ENCODE measurements at regions of chr19 and their contacts with region 1.

Region 1: GRCh38 chr19:1275260-1275975 is at the start of gene FAM174C:
- DNase-seq: peak; percentile 95 to 97 (median 97)
- H3K4me3 ChIP-seq: peak within 1 kb of the TSS; percentile 42 to 87
- H3K4me3 Mint-ChIP-seq: peak within 1 kb of the TSS; percentile 87 to 93 (median 90)
- H3K27ac ChIP-seq: peak within 1 kb of the TSS; percentile 93
- H3K27ac Mint-ChIP-seq: peak within 1 kb of the TSS; percentile 95 to 98 (median 96)
- H3K4me1 ChIP-seq: peaks cover 61% of the 10 kb centered on the region
- H3K4me1 Mint-ChIP-seq: peaks cover 30 to 66% (median 42%) of the 10 kb centered on the region in 4 donors
- H3K27me3 ChIP-seq: no peaks in the 10 kb centered on the region
- H3K27me3 Mint-ChIP-seq: no peaks in the 10 kb centered on the region
- total RNA-seq, gene FAM174C: 50.5 to 54.2 TPM

Region 2: DNA sequence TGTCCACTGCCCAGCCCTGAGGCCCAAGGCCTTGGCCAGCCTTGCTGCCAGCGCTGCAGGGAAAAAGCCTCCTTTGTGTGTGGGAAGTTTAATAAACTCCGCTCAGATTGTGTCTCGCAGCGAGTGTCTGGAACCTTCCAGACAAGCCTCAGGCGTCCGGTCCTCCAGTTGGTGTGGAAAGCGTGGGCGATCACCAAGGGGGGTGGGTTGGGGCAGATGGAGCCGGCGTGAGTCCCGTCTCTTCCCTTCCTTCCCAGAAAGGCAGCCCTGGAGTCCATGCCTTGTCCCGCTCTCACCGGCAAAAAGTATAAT is 65.2 kb before region 1 on chr19:
- CTCF ChIA-PET with region 1: no interaction called
- POLR2A ChIA-PET with region 1: no interaction called
- intact Hi-C with region 1: no loop called
- DNase-seq: peak in 1 of 5 donors; percentile 28
- H3K4me3 ChIP-seq: no peak overlapping the region
- H3K4me3 Mint-ChIP-seq: peak overlapping the region in 4 of 8 donors; percentile 8 to 65 (median 30)
- H3K27ac ChIP-seq: no peak overlapping the region
- H3K27ac Mint-ChIP-seq: peak overlapping the region in 2 of 7 donors; percentile 52 to 55
- H3K4me1 ChIP-seq: peaks cover 64% of the 10 kb centered on the region
- H3K4me1 Mint-ChIP-seq: peaks cover 17 to 54% (median 34%) of the 10 kb centered on the region in 4 donors
- H3K27me3 ChIP-seq: no peaks in the 10 kb centered on the region
- H3K27me3 Mint-ChIP-seq: no peaks in the 10 kb centered on the region

Region 3: DNA sequence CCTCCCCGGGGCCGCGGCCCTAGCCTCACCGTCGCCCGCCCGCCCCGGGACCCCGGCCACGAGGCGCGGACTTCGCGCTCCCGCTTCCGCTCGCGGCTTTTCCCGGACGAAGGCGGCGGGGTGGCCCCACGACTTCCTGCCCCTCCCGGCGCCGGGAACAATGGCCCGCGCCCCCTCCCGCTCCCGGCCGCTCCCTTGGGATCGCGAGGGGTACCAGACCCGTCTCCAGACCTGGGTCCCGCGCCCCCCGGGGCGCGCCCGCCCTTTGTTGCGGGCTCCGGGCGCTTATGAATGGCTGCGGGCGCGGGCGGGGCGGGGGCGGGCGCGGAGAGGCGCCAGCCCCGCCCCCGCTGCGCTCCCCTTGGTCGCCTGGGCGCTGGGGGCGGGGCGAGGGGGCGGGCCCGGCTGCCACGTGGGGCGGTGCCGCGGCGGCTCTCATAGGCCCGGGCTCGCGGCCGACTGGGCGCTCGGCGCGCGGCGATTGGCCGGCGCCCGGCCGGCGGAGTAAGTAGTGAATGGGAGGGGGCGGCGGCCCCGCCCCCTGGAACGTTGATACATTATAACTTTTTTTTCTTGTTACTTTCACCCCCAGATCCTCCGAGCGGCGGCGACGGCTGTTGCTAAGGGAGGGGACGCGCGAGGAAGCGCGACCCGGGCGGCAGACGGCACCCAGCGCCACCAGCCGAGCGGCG is 26.0 kb before region 1 on chr19:
- CTCF ChIA-PET with region 1: interaction called, 31 read pairs
- POLR2A ChIA-PET with region 1: interaction called, 41 read pairs
- intact Hi-C with region 1: no loop called
- DNase-seq: peak; percentile 92 to 97 (median 95)
- H3K4me3 ChIP-seq: peak overlapping the region in 1 of 2 donors; percentile 77
- H3K4me3 Mint-ChIP-seq: peak overlapping the region; percentile 83 to 94 (median 90)
- H3K27ac ChIP-seq: peak overlapping the region; percentile 92
- H3K27ac Mint-ChIP-seq: peak overlapping the region; percentile 89 to 94 (median 91)
- H3K4me1 ChIP-seq: peaks cover 33% of the 10 kb centered on the region
- H3K4me1 Mint-ChIP-seq: peaks cover 2 to 26% (median 9%) of the 10 kb centered on the region in 4 donors
- H3K27me3 ChIP-seq: no peaks in the 10 kb centered on the region
- H3K27me3 Mint-ChIP-seq: no peaks in the 10 kb centered on the region

Region 4: DNA sequence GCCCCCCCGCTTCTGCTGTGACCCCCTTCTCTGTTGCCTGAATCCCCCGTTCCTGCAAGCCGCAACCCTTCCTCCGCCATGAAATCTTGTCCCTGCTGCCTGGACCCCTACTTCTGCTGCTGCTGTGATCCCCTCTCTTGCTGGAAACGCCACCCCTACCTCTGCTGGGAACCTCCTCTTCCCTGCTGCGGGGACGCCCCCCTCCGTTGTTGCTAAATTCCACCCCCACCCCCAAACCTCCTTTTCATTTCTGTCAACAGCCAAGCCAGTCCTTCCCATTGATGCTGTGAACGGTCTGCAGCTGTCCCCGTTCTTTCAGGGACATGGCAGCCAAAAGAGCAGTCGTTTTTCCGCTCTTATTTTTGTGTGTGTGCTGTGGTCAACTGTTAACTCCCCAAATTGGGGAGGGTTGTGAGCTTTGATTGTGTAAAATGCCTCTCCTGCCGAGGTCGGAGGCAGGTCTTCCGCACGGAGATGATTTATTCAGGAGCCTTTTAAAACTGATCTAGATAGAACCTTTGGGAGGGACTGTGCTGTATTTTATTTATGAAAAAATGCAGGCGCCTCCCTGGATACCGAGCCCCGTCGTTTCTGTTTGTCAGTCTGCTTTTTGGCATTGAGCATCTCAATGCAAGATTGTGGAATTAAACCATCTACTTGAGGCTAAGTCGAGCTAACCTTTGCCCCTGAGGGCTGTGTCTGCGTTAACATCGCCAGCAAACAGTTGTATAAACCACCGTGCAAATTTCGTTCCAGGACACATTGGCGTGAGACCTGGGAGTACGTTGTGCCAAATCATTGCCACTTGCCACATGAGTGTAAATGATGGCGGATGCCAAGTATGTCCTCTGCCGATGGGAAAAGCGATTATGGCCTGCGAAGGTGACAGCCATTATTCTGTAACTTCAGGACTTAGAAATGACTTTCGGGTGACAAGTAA is 80.4 kb after region 1 on chr19:
- CTCF ChIA-PET with region 1: no interaction called
- POLR2A ChIA-PET with region 1: interaction called, 4 read pairs
- intact Hi-C with region 1: loop called (anchors 5 kb)
- DNase-seq: no peak
- H3K4me3 ChIP-seq: peak overlapping the region; percentile 28 to 50
- H3K4me3 Mint-ChIP-seq: peak overlapping the region; percentile 68 to 93 (median 89)
- H3K27ac ChIP-seq: peak overlapping the region; percentile 36
- H3K27ac Mint-ChIP-seq: peak overlapping the region; percentile 47 to 85 (median 78)
- H3K4me1 ChIP-seq: peaks cover 16% of the 10 kb centered on the region
- H3K4me1 Mint-ChIP-seq: peaks cover 8 to 32% (median 14%) of the 10 kb centered on the region in 4 donors
- H3K27me3 ChIP-seq: no peaks in the 10 kb centered on the region
- H3K27me3 Mint-ChIP-seq: no peaks in the 10 kb centered on the region

Region 5: GRCh38 chr19:1383311-1384084 is 108.1 kb after region 1 on chr19 and contains the start of gene NDUFS7:
- CTCF ChIA-PET with region 1: interaction called, 4 read pairs
- POLR2A ChIA-PET with region 1: interaction called, 6 read pairs
- intact Hi-C with region 1: loop called (anchors 1 kb)
- DNase-seq: peak; percentile 89 to 98 (median 94)
- H3K4me3 ChIP-seq: peak within 1 kb of the TSS; percentile 81 to 89
- H3K4me3 Mint-ChIP-seq: peak within 1 kb of the TSS; percentile 89 to 98 (median 94)
- H3K27ac ChIP-seq: peak within 1 kb of the TSS; percentile 69
- H3K27ac Mint-ChIP-seq: peak within 1 kb of the TSS; percentile 96 to 100 (median 99)
- H3K4me1 ChIP-seq: peaks cover 16% of the 10 kb centered on the region
- H3K4me1 Mint-ChIP-seq: peaks cover 9 to 29% (median 16%) of the 10 kb centered on the region in 4 donors
- H3K27me3 ChIP-seq: no peaks in the 10 kb centered on the region
- H3K27me3 Mint-ChIP-seq: peaks cover 3 to 5% of the 10 kb centered on the region in 2 donors
- total RNA-seq, gene NDUFS7: 68.6 to 73.5 TPM

Region 6: DNA sequence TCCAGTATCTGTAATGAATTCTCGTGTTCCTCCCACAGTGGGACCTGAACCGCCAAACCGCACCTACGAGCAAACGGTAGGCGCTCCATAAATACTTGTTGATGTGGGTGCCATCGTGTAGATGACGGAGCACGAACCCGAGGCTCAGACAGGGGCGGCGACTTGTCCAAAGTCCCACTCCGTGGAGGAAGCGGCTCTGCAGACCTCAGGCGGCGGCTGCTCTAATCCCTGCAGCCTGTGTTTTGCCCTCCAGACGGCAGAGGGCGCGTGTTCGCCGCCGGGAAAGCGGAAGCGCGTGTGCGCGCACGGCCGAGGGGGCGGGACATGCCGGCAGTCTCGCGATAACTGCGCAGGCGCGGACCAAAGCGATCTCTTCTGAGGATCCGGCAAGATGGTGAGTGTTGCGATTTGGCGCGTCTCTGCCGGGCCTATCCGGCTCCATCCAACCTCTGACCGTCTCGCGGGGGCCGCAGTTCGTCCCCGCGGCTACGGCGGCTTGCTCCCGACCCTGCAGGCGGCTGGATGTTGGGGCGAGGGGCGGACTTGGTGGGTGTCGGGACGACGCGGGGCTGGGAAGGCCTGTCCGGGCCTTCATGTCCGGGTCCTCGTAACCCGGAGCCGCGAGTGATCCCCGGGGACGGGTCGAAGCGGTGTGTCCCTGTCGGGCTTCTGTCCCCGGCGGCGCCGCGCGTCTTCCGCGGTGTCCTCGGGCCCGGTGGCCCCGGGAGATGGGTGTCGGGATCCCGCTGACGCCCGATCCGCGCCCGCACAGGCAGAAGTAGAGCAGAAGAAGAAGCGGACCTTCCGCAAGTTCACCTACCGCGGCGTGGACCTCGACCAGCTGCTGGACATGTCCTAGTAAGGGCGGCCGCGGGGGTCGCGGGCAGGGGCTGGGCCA is 162.9 kb after region 1 on chr19 and contains the start of gene RPS15:
- CTCF ChIA-PET with region 1: no interaction called
- POLR2A ChIA-PET with region 1: interaction called, 3 read pairs
- intact Hi-C with region 1: loop called (anchors 1 kb)
- DNase-seq: peak; percentile 93 to 97 (median 96)
- H3K4me3 ChIP-seq: peak within 1 kb of the TSS; percentile 47 to 79
- H3K4me3 Mint-ChIP-seq: peak within 1 kb of the TSS; percentile 97 to 99 (median 98)
- H3K27ac ChIP-seq: peak within 1 kb of the TSS; percentile 93
- H3K27ac Mint-ChIP-seq: peak within 1 kb of the TSS; percentile 98 to 99 (median 99)
- H3K4me1 ChIP-seq: peaks cover 29% of the 10 kb centered on the region
- H3K4me1 Mint-ChIP-seq: peaks cover 1 to 38% (median 19%) of the 10 kb centered on the region in 4 donors
- H3K27me3 ChIP-seq: no peaks in the 10 kb centered on the region
- H3K27me3 Mint-ChIP-seq: no peaks in the 10 kb centered on the region
- total RNA-seq, gene RPS15: 1,715 to 1,828 TPM

Region 7: GRCh38 chr19:1513499-1514294 is 238.3 kb after region 1 on chr19:
- CTCF ChIA-PET with region 1: interaction called, 3 read pairs
- POLR2A ChIA-PET with region 1: interaction called, 4 read pairs
- intact Hi-C with region 1: loop called (anchors 1 kb)
- DNase-seq: peak; percentile 60 to 69 (median 68)
- H3K4me3 ChIP-seq: no peak overlapping the region
- H3K4me3 Mint-ChIP-seq: peak overlapping the region in 3 of 8 donors; percentile 20 to 41 (median 29)
- H3K27ac ChIP-seq: no peak overlapping the region
- H3K27ac Mint-ChIP-seq: no peak overlapping the region
- H3K4me1 ChIP-seq: peaks cover 13% of the 10 kb centered on the region
- H3K4me1 Mint-ChIP-seq: peaks cover 5 to 19% (median 8%) of the 10 kb centered on the region in 4 donors
- H3K27me3 ChIP-seq: no peaks in the 10 kb centered on the region
- H3K27me3 Mint-ChIP-seq: peaks cover 0 to 12% of the 10 kb centered on the region in 2 donors

Region 8: DNA sequence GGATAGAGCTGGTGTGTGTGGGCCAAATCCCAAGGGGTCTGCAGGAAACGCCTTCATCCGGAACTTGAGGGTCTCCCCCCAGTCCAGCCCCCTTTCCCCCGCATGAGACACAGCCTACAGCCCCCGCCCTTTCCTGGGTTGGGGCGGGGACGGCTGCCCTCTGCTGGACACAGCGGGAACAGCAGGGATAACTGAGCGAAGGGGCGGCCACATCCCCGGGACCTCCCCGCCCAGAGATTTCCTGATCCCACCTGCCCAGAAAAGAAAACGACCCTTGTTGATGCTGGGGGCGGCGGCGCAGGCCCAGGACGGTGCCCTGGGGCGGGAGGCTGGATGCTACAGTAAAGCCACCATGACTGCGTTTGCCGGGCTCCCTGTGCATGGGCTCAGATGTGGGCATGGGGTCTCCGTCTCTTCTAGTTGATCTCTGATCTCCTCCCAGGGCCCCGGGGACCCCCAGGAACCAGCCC is 492.1 kb after region 1 on chr19:
- CTCF ChIA-PET with region 1: no interaction called
- POLR2A ChIA-PET with region 1: no interaction called
- intact Hi-C with region 1: loop called (anchors 2 kb)
- DNase-seq: peak; percentile 40 to 61 (median 47)
- H3K4me3 ChIP-seq: no peak overlapping the region
- H3K4me3 Mint-ChIP-seq: no peak overlapping the region
- H3K27ac ChIP-seq: no peak overlapping the region
- H3K27ac Mint-ChIP-seq: no peak overlapping the region
- H3K4me1 ChIP-seq: peaks cover 4% of the 10 kb centered on the region
- H3K4me1 Mint-ChIP-seq: peaks cover 0 to 2% (median 0%) of the 10 kb centered on the region in 4 donors
- H3K27me3 ChIP-seq: peaks cover 54% of the 10 kb centered on the region
- H3K27me3 Mint-ChIP-seq: peaks cover 41 to 51% of the 10 kb centered on the region in 2 donors

Measured in CD4-positive, alpha-beta memory T cell (primary cell).